Esophagus muscularis mucosa (tissue), 4 donors: ENCODE measurements at regions of chr9 and their contacts with region 1.

Region 1: GRCh38 chr9:133184962-133185361 is 21.2 kb upstream of the GBGT1 start:
- DNase-seq: no peak
- H3K4me3 ChIP-seq: no peak overlapping the region
- H3K27ac ChIP-seq: no peak overlapping the region
- H3K4me1 ChIP-seq: peaks cover 0 to 12% (median 7%) of the 10 kb centered on the region in 4 donors
- H3K27me3 ChIP-seq: peaks cover 0 to 64% (median 3%) of the 10 kb centered on the region in 4 donors
- CTCF ChIP-seq: peak; percentile 46 to 62 (median 54)
- EP300 ChIP-seq: no peak
- POLR2A ChIP-seq: no peak

Region 2: DNA sequence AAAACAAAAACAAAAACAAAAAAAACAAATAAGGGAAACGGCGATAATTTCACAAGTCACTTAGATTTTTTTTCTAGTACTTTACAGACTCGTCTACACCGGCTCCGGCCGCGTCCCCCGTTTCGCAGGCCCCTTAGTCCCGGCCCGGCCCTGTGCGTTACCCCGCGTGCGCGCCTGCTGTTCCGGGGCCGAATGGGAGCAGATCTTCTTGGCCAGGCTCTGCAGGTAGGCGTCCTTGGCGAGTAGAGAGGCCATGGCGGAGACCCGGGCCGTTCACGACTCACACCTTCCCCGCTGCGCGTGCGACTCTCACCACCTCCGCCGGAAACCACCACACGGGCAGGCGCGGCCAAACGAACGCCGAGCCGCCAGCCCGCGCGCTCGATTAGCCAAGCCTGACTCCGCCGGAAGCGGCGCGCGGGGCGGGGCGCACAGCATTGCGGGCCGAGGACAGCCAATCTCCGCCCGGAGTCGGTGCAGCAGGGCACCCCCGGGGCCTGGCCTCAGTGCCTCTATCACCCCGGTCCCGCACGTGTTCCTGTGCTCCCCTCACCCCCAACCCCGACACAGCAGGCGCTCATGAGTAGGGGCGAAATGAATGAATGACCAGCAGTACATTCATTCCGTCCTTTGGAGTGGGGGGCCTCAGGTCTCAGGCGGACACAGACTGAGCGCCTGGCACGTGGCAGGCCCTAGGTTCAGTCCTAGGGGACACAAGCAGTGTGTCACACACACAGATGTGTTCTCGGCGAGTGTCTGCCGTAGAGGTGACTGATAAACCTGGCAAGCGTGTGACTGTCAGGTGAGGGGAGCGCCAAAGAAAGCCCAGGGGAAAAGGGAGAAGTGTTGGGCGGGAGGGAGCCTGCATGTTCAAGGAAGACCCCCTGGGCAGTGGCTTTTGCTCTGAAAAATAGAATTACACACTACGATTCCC is 151.2 kb after region 1 on chr9 and contains the start of gene SURF6:
- intact Hi-C with region 1: loop called (anchors 5 kb)
- DNase-seq: peak; percentile 97
- H3K4me3 ChIP-seq: peak within 1 kb of the TSS; percentile 82 to 90 (median 86)
- H3K27ac ChIP-seq: peak within 1 kb of the TSS; percentile 70 to 82 (median 74)
- H3K4me1 ChIP-seq: peaks cover 19 to 41% (median 34%) of the 10 kb centered on the region in 4 donors
- H3K27me3 ChIP-seq: no peaks in the 10 kb centered on the region
- CTCF ChIP-seq: peak in 2 of 3 experiments; percentile 11 to 36
- EP300 ChIP-seq: no peak
- POLR2A ChIP-seq: no peak
- total RNA-seq, gene SURF6: 15.0 to 36.2 (median 27.5) TPM

Region 3: DNA sequence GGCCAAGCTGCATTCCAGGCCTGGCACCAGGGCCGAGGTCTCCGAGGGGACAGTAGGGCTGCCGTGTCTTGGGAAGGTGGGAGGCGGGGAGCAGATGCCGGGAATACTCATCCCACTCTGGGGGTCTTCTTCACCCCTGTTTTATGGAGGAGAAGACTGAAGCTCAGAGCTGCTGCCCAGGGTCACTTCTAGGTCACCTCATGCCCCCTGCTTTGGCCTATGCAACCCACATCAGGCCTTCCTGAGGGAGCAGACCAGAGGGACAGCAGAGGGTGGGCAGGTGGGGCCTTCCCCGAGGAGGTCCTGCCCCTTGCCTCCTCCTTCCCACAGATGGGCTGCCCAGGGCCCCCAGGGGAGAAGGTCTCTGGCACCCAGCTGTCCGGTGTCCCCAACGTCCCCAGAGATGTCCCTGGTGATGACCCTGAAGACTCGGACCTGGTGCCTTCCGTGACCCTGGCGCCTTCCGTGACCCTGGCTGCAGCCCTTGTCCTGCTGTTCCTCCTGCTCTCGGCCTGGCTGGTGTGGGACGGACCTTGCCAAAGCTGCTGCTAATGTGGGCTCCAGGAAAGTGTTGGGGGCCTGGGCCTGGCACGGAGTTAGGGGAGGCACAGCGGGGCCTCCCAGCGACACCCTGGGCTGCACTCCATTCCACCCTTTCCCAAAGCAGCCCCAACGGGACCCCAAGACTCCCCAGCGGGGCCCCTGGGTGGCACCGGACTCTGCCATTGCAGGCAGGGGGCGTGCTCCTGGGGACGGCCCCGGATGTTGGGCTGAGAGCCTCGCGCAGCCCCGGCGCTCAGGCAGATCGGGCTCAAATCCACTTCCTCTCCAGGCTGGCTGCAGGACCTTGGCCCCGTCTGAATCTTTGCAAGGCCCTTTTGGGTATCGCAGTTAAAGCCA is 300.6 kb after region 1 on chr9:
- intact Hi-C with region 1: loop called (anchors 2 kb)
- DNase-seq: no peak
- H3K4me3 ChIP-seq: no peak overlapping the region
- H3K27ac ChIP-seq: no peak overlapping the region
- H3K4me1 ChIP-seq: peaks cover 0 to 11% (median 7%) of the 10 kb centered on the region in 4 donors
- H3K27me3 ChIP-seq: peaks cover 0 to 56% (median 0%) of the 10 kb centered on the region in 4 donors
- CTCF ChIP-seq: no peak
- EP300 ChIP-seq: no peak
- POLR2A ChIP-seq: no peak